HEK293 (cell line): ENCODE measurements at regions of chr12 and their contacts with region 1.

Region 1: DNA sequence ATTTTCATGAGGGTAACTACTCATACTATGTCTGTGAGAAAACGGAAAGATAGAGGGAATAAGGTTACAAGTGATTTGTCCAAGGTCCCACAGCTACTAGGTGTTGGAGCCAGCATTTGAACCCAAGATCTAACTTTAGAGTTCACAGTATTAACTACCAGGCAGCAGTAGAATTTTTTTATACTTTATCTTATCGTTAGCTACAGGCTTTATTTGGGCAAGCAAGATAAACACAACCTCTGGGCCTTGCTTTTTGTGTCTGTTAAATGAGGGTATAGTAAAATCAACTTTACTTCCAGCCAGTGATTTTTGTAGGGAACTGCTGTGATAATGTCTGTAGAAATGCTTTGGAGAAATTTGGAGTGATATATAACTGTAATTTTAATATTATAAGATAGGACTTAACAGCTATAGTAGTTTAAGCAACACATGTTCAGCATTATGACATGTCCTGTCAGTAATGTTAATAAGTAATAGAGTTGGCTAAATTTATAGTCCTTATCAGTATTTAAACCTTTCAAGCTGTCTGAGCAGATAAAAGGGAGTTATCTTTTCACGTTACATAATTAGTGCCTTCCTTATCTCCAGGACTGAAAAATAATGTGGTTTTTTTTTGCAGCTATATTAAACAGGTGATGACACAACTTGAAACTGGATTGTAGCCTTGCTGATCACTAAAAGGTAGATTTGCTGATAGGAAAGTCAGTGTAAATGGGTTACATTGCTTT is 12.8 kb downstream of the LEMD3 start:
- H3K4me3 ChIP-seq: no peak overlapping the region
- H3K27ac ChIP-seq: no peak overlapping the region
- H3K4me1 ChIP-seq: peaks cover 30% of the 10 kb centered on the region
- CTCF ChIP-seq: no peak

Region 2: DNA sequence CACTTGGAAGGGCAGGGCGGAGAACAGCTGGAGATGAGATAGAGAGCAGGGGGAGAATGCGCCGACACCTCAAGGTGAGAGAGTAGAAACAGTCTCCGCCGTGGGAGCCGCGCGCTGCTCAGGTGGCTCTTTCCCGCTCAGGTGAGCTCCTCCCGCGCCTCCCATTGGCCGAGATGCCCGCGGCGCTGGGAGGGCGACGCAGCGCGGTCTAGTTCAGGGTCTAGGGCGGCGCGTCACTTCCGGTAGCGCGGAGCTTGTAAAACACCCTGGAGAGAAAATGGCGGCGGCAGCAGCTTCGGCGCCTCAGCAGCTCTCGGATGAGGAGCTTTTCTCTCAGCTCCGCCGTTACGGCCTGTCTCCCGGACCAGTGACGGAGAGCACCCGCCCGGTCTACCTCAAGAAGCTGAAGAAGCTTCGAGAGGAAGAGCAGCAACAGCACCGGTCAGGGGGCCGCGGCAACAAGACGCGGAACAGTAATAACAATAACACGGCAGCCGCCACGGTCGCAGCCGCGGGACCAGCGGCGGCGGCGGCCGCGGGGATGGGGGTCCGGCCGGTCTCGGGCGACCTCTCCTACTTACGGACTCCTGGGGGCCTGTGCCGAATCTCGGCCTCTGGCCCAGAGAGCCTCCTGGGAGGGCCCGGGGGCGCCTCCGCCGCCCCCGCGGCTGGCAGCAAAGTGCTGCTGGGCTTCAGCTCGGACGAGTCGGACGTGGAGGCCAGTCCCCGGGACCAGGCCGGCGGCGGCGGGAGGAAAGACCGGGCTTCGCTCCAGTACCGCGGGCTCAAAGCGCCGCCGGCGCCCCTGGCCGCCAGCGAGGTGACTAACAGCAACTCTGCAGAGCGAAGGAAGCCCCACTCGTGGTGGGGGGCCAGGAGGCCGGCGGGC is 12.6 kb before region 1 on chr12 and contains the start of gene LEMD3:
- CTCF ChIA-PET with region 1: interaction called, 3 read pairs
- POLR2A ChIA-PET with region 1: interaction called, 20 read pairs
- H3K4me3 ChIP-seq: peak within 1 kb of the TSS; percentile 88
- H3K27ac ChIP-seq: peak within 1 kb of the TSS; percentile 95
- H3K4me1 ChIP-seq: no peaks in the 10 kb centered on the region
- CTCF ChIP-seq: peak; percentile 19; the same call in 1 of the 2 replicates

Region 3: GRCh38 chr12:65200007-65200665 is 18.0 kb after region 1 on chr12:
- CTCF ChIA-PET with region 1: no interaction called
- POLR2A ChIA-PET with region 1: no interaction called
- H3K4me3 ChIP-seq: no peak overlapping the region
- H3K27ac ChIP-seq: no peak overlapping the region
- H3K4me1 ChIP-seq: peaks cover 4% of the 10 kb centered on the region; the same call in 1 of the 2 replicates
- CTCF ChIP-seq: no peak